T-cell (primary cell): ENCODE measurements at regions of chr17 and their contacts with region 1.

Region 1: DNA sequence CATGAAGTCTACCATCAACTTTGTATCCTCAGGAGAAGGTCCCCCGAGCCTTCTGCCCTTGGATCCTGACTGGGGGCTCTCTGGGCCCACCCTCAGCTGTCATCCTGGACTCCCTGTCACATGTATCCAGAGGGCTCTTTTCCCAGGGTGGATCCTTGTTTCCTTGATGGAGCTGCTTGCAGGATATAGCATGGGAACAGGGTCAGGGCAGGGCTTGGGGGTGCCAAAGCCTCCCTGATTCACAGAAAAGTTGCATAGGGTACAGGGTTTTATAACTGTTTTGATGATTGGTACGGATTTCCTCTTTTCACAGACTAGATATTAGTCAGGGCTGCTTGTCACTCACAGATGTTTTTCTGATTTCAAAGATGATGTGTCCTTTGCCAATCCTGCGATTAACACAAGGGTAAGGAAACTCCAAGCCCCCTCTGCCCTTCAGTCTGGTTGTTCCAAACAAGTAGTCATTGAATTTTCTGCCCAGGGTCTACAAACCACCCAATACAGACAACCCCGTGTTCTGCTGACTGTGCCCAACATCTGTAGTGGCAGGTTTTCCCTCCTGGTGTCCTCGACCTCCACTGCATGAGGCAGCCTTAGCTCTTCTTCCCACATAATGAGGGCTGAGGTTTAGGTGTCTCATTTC is 20.6 kb upstream of the SLC35G3 start:
- DNase-seq: peak in 25 of 35 experiments; percentile 2 to 61 (median 22)
- ATAC-seq: peak; percentile 53 to 67 (median 64)
- H3K4me3 ChIP-seq: peak overlapping the region; percentile 34 to 45
- H3K4me3 Mint-ChIP-seq: peak overlapping the region; percentile 73 to 76 (median 74)
- H3K27ac ChIP-seq: peak overlapping the region; percentile 88
- H3K27ac Mint-ChIP-seq: peak overlapping the region; percentile 97 to 99
- H3K4me1 ChIP-seq: peaks cover 69 to 81% of the 10 kb centered on the region in 2 experiments
- H3K4me1 Mint-ChIP-seq: peaks cover 87 to 91% (median 90%) of the 10 kb centered on the region in 3 donors
- H3K27me3 ChIP-seq: no peaks in the 10 kb centered on the region
- H3K27me3 Mint-ChIP-seq: no peaks in the 10 kb centered on the region

Region 2: DNA sequence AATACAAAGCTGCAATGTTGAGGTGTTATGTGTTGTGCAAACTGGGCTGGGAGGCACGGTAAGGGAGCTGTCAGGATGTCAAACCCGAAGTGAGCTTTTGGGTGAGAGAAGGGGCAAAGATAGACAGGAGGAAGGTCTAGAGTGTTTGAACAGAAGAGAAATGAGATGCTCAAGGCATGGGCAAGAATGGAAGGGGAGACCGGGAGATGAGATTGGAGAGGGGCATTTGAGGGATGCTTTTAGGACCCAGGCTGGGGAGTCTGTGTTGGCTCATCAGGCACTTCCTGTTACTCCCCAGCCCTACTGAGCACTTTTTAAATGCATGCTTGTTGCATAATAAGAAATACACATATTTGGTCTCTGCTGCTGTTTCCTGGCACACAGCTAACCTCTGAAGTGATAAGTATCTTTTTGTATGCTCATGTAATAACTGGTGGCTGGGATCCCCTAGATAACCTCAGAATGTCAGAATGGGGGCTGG is 53.4 kb before region 1 on chr17:
- CTCF ChIA-PET with region 1: interaction called in 1 of 2 experiments, 13 read pairs
- POLR2A ChIA-PET with region 1: interaction called in 1 of 2 experiments, 5 read pairs
- DNase-seq: peak in 31 of 35 experiments; percentile 8 to 69 (median 28)
- ATAC-seq: peak; percentile 67 to 83 (median 80)
- H3K4me3 ChIP-seq: peak overlapping the region in 1 of 2 donors; percentile 27
- H3K4me3 Mint-ChIP-seq: peak overlapping the region; percentile 66 to 79 (median 71)
- H3K27ac ChIP-seq: peak overlapping the region; percentile 71
- H3K27ac Mint-ChIP-seq: peak overlapping the region; percentile 92 to 98
- H3K4me1 ChIP-seq: peaks cover 28 to 66% of the 10 kb centered on the region in 2 experiments
- H3K4me1 Mint-ChIP-seq: peaks cover 58 to 63% (median 61%) of the 10 kb centered on the region in 3 donors
- H3K27me3 ChIP-seq: no peaks in the 10 kb centered on the region
- H3K27me3 Mint-ChIP-seq: no peaks in the 10 kb centered on the region

Region 3: GRCh38 chr17:35242805-35243560 is 28.2 kb after region 1 on chr17 and contains the start of gene SLFN5:
- CTCF ChIA-PET with region 1: interaction called, 3 to 4 read pairs
- POLR2A ChIA-PET with region 1: interaction called, 6 to 11 read pairs
- DNase-seq: peak; percentile 86 to 98 (median 92)
- ATAC-seq: peak; percentile 73 to 85 (median 82)
- H3K4me3 ChIP-seq: peak within 1 kb of the TSS; percentile 95 to 99
- H3K4me3 Mint-ChIP-seq: peak within 1 kb of the TSS; percentile 97 to 100 (median 99)
- H3K27ac ChIP-seq: peak within 1 kb of the TSS; percentile 89
- H3K27ac Mint-ChIP-seq: peak within 1 kb of the TSS; percentile 99
- H3K4me1 ChIP-seq: peaks cover 39 to 55% of the 10 kb centered on the region in 2 experiments
- H3K4me1 Mint-ChIP-seq: peaks cover 55 to 66% (median 58%) of the 10 kb centered on the region in 3 donors
- H3K27me3 ChIP-seq: no peaks in the 10 kb centered on the region
- H3K27me3 Mint-ChIP-seq: no peaks in the 10 kb centered on the region
- total RNA-seq, gene SLFN5: 132 to 195 (median 164) TPM